Naive thymus-derived CD4-positive, alpha-beta T cell (primary cell): ENCODE measurements at regions of chr7 and their contacts with region 1.

Region 1: GRCh38 chr7:97027427-97028234 is 3.0 kb upstream of the DLX5 start:
- DNase-seq: peak; percentile 34 to 69 (median 59)
- ATAC-seq: peak; percentile 89
- H3K4me3 ChIP-seq: peak overlapping the region; percentile 46
- H3K4me3 Mint-ChIP-seq: peak overlapping the region; percentile 71 to 92 (median 87)
- H3K27ac ChIP-seq: no peak overlapping the region
- H3K27ac Mint-ChIP-seq: peak overlapping the region in 1 of 9 donors; percentile 23
- H3K4me1 ChIP-seq: peaks cover 0 to 18% of the 10 kb centered on the region in 2 donors
- H3K4me1 Mint-ChIP-seq: peaks cover 19 to 51% (median 43%) of the 10 kb centered on the region in 7 donors
- H3K27me3 ChIP-seq: peaks cover 0 to 31% of the 10 kb centered on the region in 2 donors
- H3K27me3 Mint-ChIP-seq: peaks cover 62 to 81% (median 78%) of the 10 kb centered on the region in 5 donors

Region 2: DNA sequence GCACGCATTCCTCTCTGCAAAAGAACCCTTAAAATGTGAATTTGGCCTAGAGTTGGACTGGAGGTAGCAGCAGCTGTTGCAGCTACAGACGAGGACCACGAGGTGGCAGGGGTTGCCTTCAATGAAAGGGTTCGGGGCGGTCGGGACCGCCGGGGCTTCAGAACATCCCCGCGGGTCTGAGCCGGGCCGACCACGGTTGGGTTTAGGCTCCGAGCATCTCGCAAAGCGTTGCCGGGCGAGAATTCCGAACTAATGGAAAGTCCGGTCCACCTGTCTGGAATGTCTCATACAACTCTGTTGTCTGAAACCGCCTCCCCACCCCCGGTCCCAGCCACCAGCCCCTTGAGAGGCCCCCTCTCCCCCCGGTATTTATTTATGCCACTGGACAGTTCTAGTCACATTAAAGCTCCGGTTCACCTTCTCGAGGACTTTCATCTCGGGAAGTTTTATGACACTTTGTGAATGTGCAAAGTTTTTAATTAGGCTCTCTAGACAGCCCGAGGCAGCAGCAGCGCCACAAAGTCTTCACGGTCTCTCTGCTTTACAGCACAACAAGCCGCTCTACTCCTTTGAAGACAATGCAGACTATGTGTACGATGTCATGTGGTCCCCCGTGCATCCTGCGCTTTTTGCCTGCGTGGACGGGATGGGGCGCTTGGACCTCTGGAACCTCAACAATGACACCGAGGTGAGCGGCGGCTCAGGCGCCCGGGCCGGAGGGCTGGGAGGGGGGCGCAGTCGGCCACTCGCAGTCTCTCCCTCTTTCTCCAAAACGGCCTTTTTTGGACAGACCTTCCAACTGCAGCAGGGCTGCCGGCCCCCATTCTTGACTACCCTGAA is 951.9 kb before region 1 on chr7:
- CTCF ChIA-PET with region 1: interaction called, 4 read pairs
- POLR2A ChIA-PET with region 1: no interaction called
- intact Hi-C with region 1: loop called in 1 of 2 experiments (anchors 1 kb)
- DNase-seq: peak; percentile 11 to 54 (median 48)
- ATAC-seq: peak; percentile 81
- H3K4me3 ChIP-seq: peak overlapping the region; percentile 58
- H3K4me3 Mint-ChIP-seq: peak overlapping the region; percentile 69 to 92 (median 86)
- H3K27ac ChIP-seq: no peak overlapping the region
- H3K27ac Mint-ChIP-seq: no peak overlapping the region
- H3K4me1 ChIP-seq: peaks cover 3 to 7% of the 10 kb centered on the region in 2 donors
- H3K4me1 Mint-ChIP-seq: peaks cover 6 to 12% (median 9%) of the 10 kb centered on the region in 7 donors
- H3K27me3 ChIP-seq: peaks cover 9 to 10% of the 10 kb centered on the region in 2 donors
- H3K27me3 Mint-ChIP-seq: peaks cover 49 to 60% (median 55%) of the 10 kb centered on the region in 5 donors

Region 3: GRCh38 chr7:96414931-96415292 is 612.7 kb before region 1 on chr7:
- CTCF ChIA-PET with region 1: no interaction called
- POLR2A ChIA-PET with region 1: no interaction called
- intact Hi-C with region 1: loop called (anchors 1 kb)
- DNase-seq: peak in 6 of 9 donors; percentile 13 to 40 (median 24)
- ATAC-seq: peak; percentile 67
- H3K4me3 ChIP-seq: no peak overlapping the region
- H3K4me3 Mint-ChIP-seq: no peak overlapping the region
- H3K27ac ChIP-seq: no peak overlapping the region
- H3K27ac Mint-ChIP-seq: no peak overlapping the region
- H3K4me1 ChIP-seq: no peaks in the 10 kb centered on the region
- H3K4me1 Mint-ChIP-seq: peaks cover 0 to 7% (median 0%) of the 10 kb centered on the region in 7 donors
- H3K27me3 ChIP-seq: no peaks in the 10 kb centered on the region
- H3K27me3 Mint-ChIP-seq: peaks cover 5 to 24% (median 18%) of the 10 kb centered on the region in 5 donors

Region 4: DNA sequence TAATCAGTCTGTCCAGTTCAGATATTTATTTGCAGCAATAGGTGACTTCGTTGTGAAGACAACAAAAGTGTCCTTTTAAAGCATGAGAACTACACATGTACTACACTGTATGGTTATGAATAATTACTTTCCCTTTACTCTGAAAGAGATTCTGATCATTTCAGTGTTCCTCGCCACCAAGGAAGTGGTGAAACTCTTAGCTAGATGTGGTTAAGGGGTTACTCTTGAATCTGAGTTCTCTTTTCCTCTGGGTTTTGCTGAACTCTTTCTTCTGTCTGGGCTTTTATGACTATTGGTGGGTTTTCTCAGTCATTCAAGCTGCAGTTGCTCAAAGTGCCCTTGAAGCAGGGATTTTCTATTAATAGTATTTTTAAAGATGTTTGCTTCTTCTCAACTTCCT is 190.0 kb before region 1 on chr7:
- CTCF ChIA-PET with region 1: interaction called, 3 read pairs
- POLR2A ChIA-PET with region 1: no interaction called
- intact Hi-C with region 1: loop called in 1 of 2 experiments (anchors 10 kb)
- DNase-seq: peak in 8 of 9 donors; percentile 22 to 81 (median 70)
- ATAC-seq: peak; percentile 91
- H3K4me3 ChIP-seq: no peak overlapping the region
- H3K4me3 Mint-ChIP-seq: peak overlapping the region; percentile 5 to 85 (median 76)
- H3K27ac ChIP-seq: no peak overlapping the region
- H3K27ac Mint-ChIP-seq: peak overlapping the region in 4 of 9 donors; percentile 6 to 60 (median 28)
- H3K4me1 ChIP-seq: peaks cover 16 to 26% of the 10 kb centered on the region in 2 donors
- H3K4me1 Mint-ChIP-seq: peaks cover 21 to 46% (median 35%) of the 10 kb centered on the region in 7 donors
- H3K27me3 ChIP-seq: no peaks in the 10 kb centered on the region
- H3K27me3 Mint-ChIP-seq: peaks cover 17 to 58% (median 41%) of the 10 kb centered on the region in 5 donors

Region 5: DNA sequence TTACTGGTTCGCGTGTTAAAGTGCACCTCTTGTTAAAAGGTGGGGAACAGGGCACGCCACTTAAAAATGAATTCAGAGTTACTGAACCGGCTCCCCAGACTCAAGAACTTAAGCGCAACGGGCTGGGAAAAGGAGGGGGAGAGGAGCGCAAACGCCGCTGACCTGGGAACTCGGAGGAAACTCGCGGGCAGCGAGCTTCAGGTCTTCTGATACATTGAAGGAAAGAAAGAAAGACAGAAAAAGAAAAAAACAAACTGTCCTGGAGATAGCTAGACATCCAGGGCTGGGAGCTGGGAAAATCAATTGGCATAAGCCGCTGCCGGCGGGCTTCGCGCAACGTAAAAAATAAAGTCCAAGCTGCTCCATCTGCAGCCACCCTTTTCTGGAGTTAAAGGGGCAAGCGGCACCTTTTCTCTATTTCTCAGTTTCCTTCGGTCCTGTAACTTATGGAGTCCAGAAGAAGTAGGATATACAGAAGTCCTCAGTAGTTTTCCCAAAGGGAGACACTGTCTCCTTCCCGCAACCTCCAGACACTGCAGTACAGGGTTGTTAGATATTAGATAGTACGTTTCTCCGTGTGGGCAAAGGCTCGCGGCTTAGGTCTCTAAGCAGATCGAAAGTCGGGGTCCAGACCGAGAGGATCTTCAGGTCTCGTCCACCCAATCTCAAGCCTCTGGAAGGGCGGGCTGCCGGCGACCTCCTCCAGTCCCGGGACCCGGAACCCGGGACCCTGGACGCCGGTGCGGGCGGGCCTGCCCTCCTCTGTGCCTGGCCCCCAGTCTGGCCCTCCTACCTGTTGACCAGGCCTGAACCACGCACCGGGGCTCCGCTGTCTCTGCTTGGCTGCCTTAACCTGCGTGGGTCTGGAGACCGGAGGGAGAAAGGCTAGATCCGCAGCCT is 24.0 kb before region 1 on chr7:
- CTCF ChIA-PET with region 1: interaction called, 3 read pairs
- POLR2A ChIA-PET with region 1: no interaction called
- intact Hi-C with region 1: loop called in 1 of 2 experiments (anchors 1 kb)
- DNase-seq: no peak
- ATAC-seq: no peak
- H3K4me3 ChIP-seq: no peak overlapping the region
- H3K4me3 Mint-ChIP-seq: peak overlapping the region in 9 of 10 donors; percentile 17 to 88 (median 74)
- H3K27ac ChIP-seq: no peak overlapping the region
- H3K27ac Mint-ChIP-seq: peak overlapping the region in 1 of 9 donors; percentile 52
- H3K4me1 ChIP-seq: peaks cover 12 to 19% of the 10 kb centered on the region in 2 donors
- H3K4me1 Mint-ChIP-seq: peaks cover 7 to 29% (median 22%) of the 10 kb centered on the region in 7 donors
- H3K27me3 ChIP-seq: peaks cover 8 to 48% of the 10 kb centered on the region in 2 donors
- H3K27me3 Mint-ChIP-seq: peaks cover 80 to 94% (median 85%) of the 10 kb centered on the region in 5 donors

Region 6: GRCh38 chr7:97179454-97180104 is 151.9 kb after region 1 on chr7:
- CTCF ChIA-PET with region 1: no interaction called
- POLR2A ChIA-PET with region 1: no interaction called
- intact Hi-C with region 1: loop called in 1 of 2 experiments (anchors 1 kb)
- DNase-seq: peak in 7 of 9 donors; percentile 18 to 63 (median 53)
- ATAC-seq: peak; percentile 88
- H3K4me3 ChIP-seq: no peak overlapping the region
- H3K4me3 Mint-ChIP-seq: no peak overlapping the region
- H3K27ac ChIP-seq: no peak overlapping the region
- H3K27ac Mint-ChIP-seq: no peak overlapping the region
- H3K4me1 ChIP-seq: no peaks in the 10 kb centered on the region
- H3K4me1 Mint-ChIP-seq: peaks cover 0 to 4% (median 0%) of the 10 kb centered on the region in 7 donors
- H3K27me3 ChIP-seq: no peaks in the 10 kb centered on the region
- H3K27me3 Mint-ChIP-seq: no peaks in the 10 kb centered on the region